IMR-90 (cell line): ENCODE measurements at regions of chr14 and their contacts with region 1.

Region 1: GRCh38 chr14:69079183-69079742 is 73.7 kb downstream of the DCAF5 start:
- DNase-seq: peak; percentile 88
- ATAC-seq: peak; percentile 85
- H3K4me3 ChIP-seq: no peak overlapping the region
- H3K27ac ChIP-seq: peak overlapping the region; percentile 99
- H3K4me1 ChIP-seq: peaks cover 13% of the 10 kb centered on the region
- H3K27me3 ChIP-seq: no peaks in the 10 kb centered on the region
- CTCF ChIP-seq: no peak
- POLR2A ChIP-seq: no peak; the same call in 1 of the 2 replicates
- RAD21 ChIP-seq: no peak

Region 2: DNA sequence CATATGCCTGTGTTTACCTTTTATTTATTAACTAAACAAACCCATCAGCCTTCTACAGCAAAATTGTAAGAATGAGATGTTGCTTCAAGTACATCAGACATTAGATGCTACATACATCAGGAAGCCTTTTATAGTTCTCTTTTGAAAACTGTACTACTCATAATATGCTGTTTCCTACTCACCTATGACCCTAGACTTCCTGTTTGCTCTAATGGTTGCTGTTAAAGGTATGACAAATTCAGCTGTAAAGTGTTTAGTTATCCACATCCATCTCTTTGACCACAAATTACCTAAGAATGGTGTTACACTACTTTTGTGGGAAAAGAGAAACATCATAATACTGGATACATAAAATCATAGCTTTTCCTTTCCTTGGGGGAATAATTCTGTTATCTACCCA is 1039.7 kb before region 1 on chr14:
- CTCF ChIA-PET with region 1: no interaction called
- POLR2A ChIA-PET with region 1: no interaction called
- dilution Hi-C with region 1: no loop called
- in situ Hi-C with region 1: no loop called
- intact Hi-C with region 1: no loop called
- DNase-seq: peak; percentile 13
- ATAC-seq: no peak
- H3K4me3 ChIP-seq: no peak overlapping the region
- H3K27ac ChIP-seq: no peak overlapping the region
- H3K4me1 ChIP-seq: no peaks in the 10 kb centered on the region
- H3K27me3 ChIP-seq: no peaks in the 10 kb centered on the region
- CTCF ChIP-seq: no peak
- POLR2A ChIP-seq: no peak
- RAD21 ChIP-seq: no peak

Region 3: GRCh38 chr14:69055999-69056788 is 23.1 kb before region 1 on chr14:
- CTCF ChIA-PET with region 1: no interaction called
- POLR2A ChIA-PET with region 1: no interaction called
- dilution Hi-C with region 1: no loop called
- in situ Hi-C with region 1: no loop called
- intact Hi-C with region 1: loop called (anchors 1 kb)
- DNase-seq: peak; percentile 54
- ATAC-seq: no peak
- H3K4me3 ChIP-seq: no peak overlapping the region
- H3K27ac ChIP-seq: peak overlapping the region; percentile 52; the same call in 1 of the 2 replicates
- H3K4me1 ChIP-seq: peaks cover 37% of the 10 kb centered on the region
- H3K27me3 ChIP-seq: no peaks in the 10 kb centered on the region
- CTCF ChIP-seq: 0 out of 2 replicates have a peak, but pooled peaks have one; percentile 7
- POLR2A ChIP-seq: no peak; the same call in 1 of the 2 replicates
- RAD21 ChIP-seq: no peak

Region 4: DNA sequence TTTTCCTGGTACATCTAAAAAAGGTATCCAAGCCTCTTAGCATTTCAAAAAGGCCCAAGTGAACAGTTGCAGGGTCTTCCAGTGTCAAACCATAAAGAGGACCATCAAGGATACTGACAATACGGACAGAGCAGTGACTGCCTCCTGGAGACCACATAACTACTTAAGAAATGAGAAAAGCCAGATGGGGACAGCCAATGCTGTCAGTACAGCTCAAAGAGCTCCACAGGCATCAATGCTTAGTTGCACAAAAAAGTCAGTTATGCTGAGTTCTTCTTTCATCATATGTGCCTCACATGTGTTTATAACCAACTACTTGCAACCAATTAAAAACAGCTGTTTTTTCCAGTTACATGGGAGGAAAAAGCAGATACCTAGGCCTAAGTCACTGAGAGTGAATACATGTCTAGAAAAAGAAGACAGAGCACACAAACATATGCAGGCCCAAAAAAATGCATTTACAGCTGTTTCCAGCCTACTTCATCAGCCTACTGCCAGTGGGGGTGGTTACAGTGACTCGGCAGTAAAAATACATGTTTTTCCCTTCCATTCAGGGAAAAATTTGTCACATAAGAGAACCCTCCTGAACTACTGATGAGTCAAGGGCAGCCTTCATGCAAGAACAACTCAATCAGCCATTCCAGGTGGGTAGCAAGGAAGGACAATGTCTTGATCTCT is 10.4 kb before region 1 on chr14:
- CTCF ChIA-PET with region 1: no interaction called
- POLR2A ChIA-PET with region 1: no interaction called
- dilution Hi-C with region 1: no loop called
- in situ Hi-C with region 1: no loop called
- intact Hi-C with region 1: loop called (anchors 1 kb)
- DNase-seq: peak; percentile 93
- ATAC-seq: peak; percentile 92
- H3K4me3 ChIP-seq: no peak overlapping the region
- H3K27ac ChIP-seq: peak overlapping the region; percentile 97
- H3K4me1 ChIP-seq: peaks cover 9% of the 10 kb centered on the region
- H3K27me3 ChIP-seq: no peaks in the 10 kb centered on the region
- CTCF ChIP-seq: no peak
- POLR2A ChIP-seq: no peak
- RAD21 ChIP-seq: no peak